ENCODE measurements at regions of chr5 and their contacts with region 1.

Region 1: DNA sequence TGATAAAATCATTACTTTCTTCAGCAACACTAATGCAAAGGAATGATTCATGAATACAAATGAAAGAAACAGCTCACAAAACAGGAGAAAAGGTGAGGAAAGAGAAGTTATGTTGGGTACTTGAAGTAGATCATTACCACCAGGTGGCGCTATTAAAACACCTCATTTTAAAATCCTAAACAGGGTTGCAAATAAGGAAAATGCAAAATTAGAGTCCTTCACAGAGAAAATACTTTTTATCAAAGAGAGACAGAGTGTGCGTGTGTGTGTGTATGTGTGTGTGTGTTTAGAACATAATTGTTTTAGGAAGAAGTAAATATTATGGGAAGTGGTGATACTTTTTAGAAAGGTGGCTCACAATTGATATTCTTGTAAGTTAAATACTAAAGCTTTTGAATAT is 49.5 kb upstream of the CD180 start:
- DNase-seq: peak in 2 of 5 donors; percentile 52 to 59
- H3K4me3 ChIP-seq: no peak overlapping the region
- H3K4me3 Mint-ChIP-seq: no peak overlapping the region
- H3K27ac ChIP-seq: no peak overlapping the region
- H3K27ac Mint-ChIP-seq: no peak overlapping the region
- H3K4me1 ChIP-seq: peaks cover 14% of the 10 kb centered on the region
- H3K4me1 Mint-ChIP-seq: peaks cover 11 to 17% (median 12%) of the 10 kb centered on the region in 3 donors
- H3K27me3 ChIP-seq: no peaks in the 10 kb centered on the region
- H3K27me3 Mint-ChIP-seq: peaks cover 0 to 2% of the 10 kb centered on the region in 2 donors

Region 2: DNA sequence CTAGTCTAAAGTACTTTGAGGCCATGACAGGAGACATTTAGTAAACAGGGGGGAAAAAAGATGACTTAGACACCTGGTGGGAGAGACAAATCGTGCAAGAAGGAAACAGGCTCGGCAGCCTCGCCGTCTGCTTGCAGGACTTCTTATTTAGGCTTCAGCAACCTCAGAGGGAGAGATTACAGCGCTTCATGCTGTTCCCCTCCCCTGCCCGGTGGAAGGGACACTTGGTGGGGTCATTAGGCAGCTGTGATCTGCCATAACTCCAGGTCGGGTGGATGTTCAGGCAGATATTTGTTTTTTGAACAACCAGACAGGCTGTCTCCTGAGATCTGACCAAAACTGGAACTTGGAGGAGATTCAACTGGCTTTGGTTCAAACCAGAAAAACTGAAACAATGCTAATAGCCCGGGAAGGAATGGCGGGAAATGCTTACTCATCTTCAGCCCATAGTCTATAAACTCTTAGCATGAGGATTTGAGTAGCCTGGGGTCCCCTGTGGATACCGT is 11.4 kb before region 1 on chr5:
- CTCF ChIA-PET with region 1: interaction called, 12 read pairs
- POLR2A ChIA-PET with region 1: no interaction called
- DNase-seq: no peak
- H3K4me3 ChIP-seq: no peak overlapping the region
- H3K4me3 Mint-ChIP-seq: no peak overlapping the region
- H3K27ac ChIP-seq: no peak overlapping the region
- H3K27ac Mint-ChIP-seq: no peak overlapping the region
- H3K4me1 ChIP-seq: no peaks in the 10 kb centered on the region
- H3K4me1 Mint-ChIP-seq: no peaks in the 10 kb centered on the region
- H3K27me3 ChIP-seq: no peaks in the 10 kb centered on the region
- H3K27me3 Mint-ChIP-seq: peaks cover 2 to 7% of the 10 kb centered on the region in 2 donors

Region 3: GRCh38 chr5:67315082-67315989 is 69.2 kb after region 1 on chr5:
- CTCF ChIA-PET with region 1: no interaction called
- POLR2A ChIA-PET with region 1: no interaction called
- DNase-seq: no peak
- H3K4me3 ChIP-seq: no peak overlapping the region
- H3K4me3 Mint-ChIP-seq: no peak overlapping the region
- H3K27ac ChIP-seq: no peak overlapping the region
- H3K27ac Mint-ChIP-seq: peak overlapping the region in 1 of 8 donors; percentile 23
- H3K4me1 ChIP-seq: no peaks in the 10 kb centered on the region
- H3K4me1 Mint-ChIP-seq: peaks cover 0 to 13% (median 5%) of the 10 kb centered on the region in 3 donors
- H3K27me3 ChIP-seq: no peaks in the 10 kb centered on the region
- H3K27me3 Mint-ChIP-seq: no peaks in the 10 kb centered on the region

Region 4: GRCh38 chr5:68252673-68253623 is 1006.8 kb after region 1 on chr5:
- CTCF ChIA-PET with region 1: interaction called, 16 read pairs
- POLR2A ChIA-PET with region 1: no interaction called
- DNase-seq: peak in 2 of 5 donors; percentile 21 to 59
- H3K4me3 ChIP-seq: no peak overlapping the region
- H3K4me3 Mint-ChIP-seq: peak overlapping the region in 4 of 7 donors; percentile 9 to 56 (median 28)
- H3K27ac ChIP-seq: no peak overlapping the region
- H3K27ac Mint-ChIP-seq: peak overlapping the region in 6 of 8 donors; percentile 2 to 96 (median 90)
- H3K4me1 ChIP-seq: peaks cover 93% of the 10 kb centered on the region
- H3K4me1 Mint-ChIP-seq: peaks cover 90 to 96% (median 96%) of the 10 kb centered on the region in 3 donors
- H3K27me3 ChIP-seq: no peaks in the 10 kb centered on the region
- H3K27me3 Mint-ChIP-seq: no peaks in the 10 kb centered on the region

Region 5: DNA sequence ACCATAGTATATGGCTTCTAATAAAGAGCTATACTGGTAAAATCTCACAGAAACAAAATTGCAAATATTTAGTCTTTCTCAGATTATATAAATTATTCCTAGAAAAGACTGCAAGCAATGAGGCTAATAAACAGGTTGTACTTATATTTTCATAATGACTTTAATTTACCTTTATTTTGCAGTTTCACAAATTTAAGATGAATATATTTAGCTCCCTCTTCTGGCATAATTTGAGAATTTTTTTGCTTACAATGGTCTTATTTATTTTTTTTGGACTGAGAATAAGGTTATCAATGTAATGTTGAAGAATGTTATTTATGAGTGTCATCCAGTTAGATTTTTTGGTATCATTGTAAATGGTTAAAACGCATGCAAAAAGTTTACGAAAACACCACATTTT is 1026.2 kb after region 1 on chr5:
- CTCF ChIA-PET with region 1: interaction called, 14 read pairs
- POLR2A ChIA-PET with region 1: no interaction called
- DNase-seq: no peak
- H3K4me3 ChIP-seq: no peak overlapping the region
- H3K4me3 Mint-ChIP-seq: peak overlapping the region in 2 of 7 donors; percentile 5 to 13
- H3K27ac ChIP-seq: no peak overlapping the region
- H3K27ac Mint-ChIP-seq: peak overlapping the region in 7 of 8 donors; percentile 27 to 91 (median 70)
- H3K4me1 ChIP-seq: peaks cover 94% of the 10 kb centered on the region
- H3K4me1 Mint-ChIP-seq: peaks cover 84 to 95% (median 95%) of the 10 kb centered on the region in 3 donors
- H3K27me3 ChIP-seq: no peaks in the 10 kb centered on the region
- H3K27me3 Mint-ChIP-seq: no peaks in the 10 kb centered on the region

Measured in CD8-positive, alpha-beta memory T cell (primary cell).